Panc1 (cell line): ENCODE measurements at regions of chr7 and their contacts with region 1.

Region 1: GRCh38 chr7:40134428-40135316 is at the starts of genes MPLKIP and SUGCT:
- DNase-seq: peak; percentile 80
- ATAC-seq: peak; percentile 96
- H3K4me3 ChIP-seq: peak within 1 kb of the TSS; percentile 71 to 79
- H3K27ac ChIP-seq: peak within 1 kb of the TSS; percentile 95
- H3K4me1 ChIP-seq: peaks cover 10% of the 10 kb centered on the region; the same call in 1 of the 2 replicates
- H3K27me3 ChIP-seq: no peaks in the 10 kb centered on the region
- CTCF ChIP-seq: peak; percentile 100
- total RNA-seq, gene MPLKIP: 42.6 TPM
- total RNA-seq, gene SUGCT: 3.1 TPM

Region 2: GRCh38 chr7:39633563-39634477 is 500.9 kb before region 1 on chr7:
- CTCF ChIA-PET with region 1: no interaction called
- POLR2A ChIA-PET with region 1: no interaction called
- in situ Hi-C with region 1: no loop called
- intact Hi-C with region 1: no loop called
- DNase-seq: no peak
- ATAC-seq: no peak
- H3K4me3 ChIP-seq: no peak overlapping the region
- H3K27ac ChIP-seq: no peak overlapping the region
- H3K4me1 ChIP-seq: no peaks in the 10 kb centered on the region
- H3K27me3 ChIP-seq: no peaks in the 10 kb centered on the region
- CTCF ChIP-seq: no peak

Region 3: GRCh38 chr7:40105879-40106473 is 28.7 kb before region 1 on chr7:
- CTCF ChIA-PET with region 1: interaction called, 14 read pairs
- POLR2A ChIA-PET with region 1: interaction called, 4 read pairs
- in situ Hi-C with region 1: no loop called
- intact Hi-C with region 1: no loop called
- DNase-seq: no peak
- ATAC-seq: no peak
- H3K4me3 ChIP-seq: no peak overlapping the region
- H3K27ac ChIP-seq: no peak overlapping the region
- H3K4me1 ChIP-seq: no peaks in the 10 kb centered on the region
- H3K27me3 ChIP-seq: no peaks in the 10 kb centered on the region
- CTCF ChIP-seq: no peak

Region 4: GRCh38 chr7:41437257-41438196 is 1302.9 kb after region 1 on chr7:
- CTCF ChIA-PET with region 1: no interaction called
- POLR2A ChIA-PET with region 1: no interaction called
- in situ Hi-C with region 1: no loop called
- intact Hi-C with region 1: no loop called
- DNase-seq: no peak
- ATAC-seq: no peak
- H3K4me3 ChIP-seq: no peak overlapping the region
- H3K27ac ChIP-seq: no peak overlapping the region
- H3K4me1 ChIP-seq: no peaks in the 10 kb centered on the region
- H3K27me3 ChIP-seq: no peaks in the 10 kb centered on the region
- CTCF ChIP-seq: no peak